PC-9 (cell line): ENCODE measurements at regions of chr2 and their contacts with region 1.

Region 1: GRCh38 chr2:46650556-46651001 is 171.2 kb downstream of the TMEM247 start:
- DNase-seq: peak; percentile 61 to 70
- H3K4me3 ChIP-seq: no peak overlapping the region
- H3K27ac ChIP-seq: no peak overlapping the region
- H3K4me1 ChIP-seq: peaks cover 30% of the 10 kb centered on the region
- H3K27me3 ChIP-seq: no peaks in the 10 kb centered on the region
- CTCF ChIP-seq: peak; percentile 98

Region 2: DNA sequence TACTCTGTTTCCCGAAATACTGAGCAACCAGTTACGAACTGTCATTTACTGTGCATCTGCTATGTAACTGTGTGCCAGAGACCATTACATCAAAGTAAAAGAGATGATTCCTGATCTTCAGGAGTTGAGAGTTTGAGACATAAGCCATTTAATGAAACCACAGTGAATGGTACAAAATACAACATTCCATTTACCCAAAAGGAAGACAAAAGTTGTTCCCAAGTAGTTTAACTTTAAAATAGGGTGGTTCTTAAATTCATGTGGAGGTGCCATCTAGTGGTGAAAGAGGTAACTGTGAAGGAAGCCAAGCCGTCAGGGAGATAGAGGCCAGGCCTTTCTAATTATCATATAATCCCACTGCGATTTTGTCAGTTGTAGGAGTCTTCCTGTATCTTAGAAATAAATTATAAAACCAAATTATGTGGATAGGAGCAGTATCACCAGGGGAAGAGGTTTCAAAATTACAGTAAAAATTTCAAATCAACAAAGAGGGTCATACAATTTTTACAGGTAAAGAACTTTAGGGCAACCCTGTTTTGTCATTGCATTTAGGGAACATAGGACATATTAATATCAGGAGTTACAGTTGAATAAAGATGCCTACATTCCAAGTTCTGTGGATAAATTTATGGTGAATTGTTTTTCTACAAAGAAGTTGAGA is 285.7 kb before region 1 on chr2:
- CTCF ChIA-PET with region 1: no interaction called
- POLR2A ChIA-PET with region 1: no interaction called
- intact Hi-C with region 1: loop called (anchors 10 kb)
- DNase-seq: peak; percentile 35 to 49
- H3K4me3 ChIP-seq: no peak overlapping the region
- H3K27ac ChIP-seq: no peak overlapping the region
- H3K4me1 ChIP-seq: 0 out of 2 replicates have a peak, but pooled peaks cover 12% of the 10 kb centered on the region
- H3K27me3 ChIP-seq: no peaks in the 10 kb centered on the region
- CTCF ChIP-seq: peak; percentile 98

Region 3: GRCh38 chr2:46612675-46613074 is 37.9 kb before region 1 on chr2:
- CTCF ChIA-PET with region 1: no interaction called
- POLR2A ChIA-PET with region 1: no interaction called
- intact Hi-C with region 1: no loop called
- DNase-seq: no peak
- H3K4me3 ChIP-seq: no peak overlapping the region
- H3K27ac ChIP-seq: no peak overlapping the region
- H3K4me1 ChIP-seq: peaks cover 10% of the 10 kb centered on the region
- H3K27me3 ChIP-seq: no peaks in the 10 kb centered on the region
- CTCF ChIP-seq: no peak

Region 4: DNA sequence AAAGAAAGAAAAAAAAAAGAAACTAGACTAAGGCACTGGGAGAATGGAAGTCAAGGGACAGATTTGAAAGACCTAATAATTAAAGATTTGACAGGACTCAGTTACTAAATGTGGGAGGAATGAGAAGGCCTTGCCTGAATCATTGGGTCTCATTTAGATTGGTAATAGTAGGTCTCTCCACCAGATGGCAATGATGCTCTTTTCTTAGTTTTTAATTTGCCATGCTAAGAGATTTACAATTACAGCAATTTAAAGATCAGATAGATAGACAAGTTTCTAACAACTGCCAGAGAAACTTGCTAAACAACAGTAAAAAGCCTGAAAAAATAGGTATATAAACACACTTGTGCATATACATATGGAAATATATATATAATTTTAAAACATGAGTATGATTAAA is 18.2 kb before region 1 on chr2:
- CTCF ChIA-PET with region 1: interaction called, 7 read pairs
- POLR2A ChIA-PET with region 1: no interaction called
- intact Hi-C with region 1: loop called (anchors 1 kb)
- DNase-seq: peak in 1 of 2 experiments; percentile 60
- H3K4me3 ChIP-seq: no peak overlapping the region
- H3K27ac ChIP-seq: no peak overlapping the region
- H3K4me1 ChIP-seq: no peaks in the 10 kb centered on the region
- H3K27me3 ChIP-seq: no peaks in the 10 kb centered on the region
- CTCF ChIP-seq: peak; percentile 85

Region 5: GRCh38 chr2:46735108-46735691 is 84.6 kb after region 1 on chr2:
- CTCF ChIA-PET with region 1: no interaction called
- POLR2A ChIA-PET with region 1: no interaction called
- intact Hi-C with region 1: no loop called
- DNase-seq: no peak
- H3K4me3 ChIP-seq: no peak overlapping the region
- H3K27ac ChIP-seq: no peak overlapping the region
- H3K4me1 ChIP-seq: peaks cover 17% of the 10 kb centered on the region
- H3K27me3 ChIP-seq: no peaks in the 10 kb centered on the region
- CTCF ChIP-seq: no peak

Region 6: GRCh38 chr2:46776687-46777327 is 126.2 kb after region 1 on chr2:
- CTCF ChIA-PET with region 1: no interaction called
- POLR2A ChIA-PET with region 1: no interaction called
- intact Hi-C with region 1: loop called (anchors 5 kb)
- DNase-seq: peak; percentile 34 to 51
- H3K4me3 ChIP-seq: no peak overlapping the region
- H3K27ac ChIP-seq: no peak overlapping the region
- H3K4me1 ChIP-seq: peaks cover 9% of the 10 kb centered on the region
- H3K27me3 ChIP-seq: no peaks in the 10 kb centered on the region
- CTCF ChIP-seq: peak; percentile 85

Region 7: DNA sequence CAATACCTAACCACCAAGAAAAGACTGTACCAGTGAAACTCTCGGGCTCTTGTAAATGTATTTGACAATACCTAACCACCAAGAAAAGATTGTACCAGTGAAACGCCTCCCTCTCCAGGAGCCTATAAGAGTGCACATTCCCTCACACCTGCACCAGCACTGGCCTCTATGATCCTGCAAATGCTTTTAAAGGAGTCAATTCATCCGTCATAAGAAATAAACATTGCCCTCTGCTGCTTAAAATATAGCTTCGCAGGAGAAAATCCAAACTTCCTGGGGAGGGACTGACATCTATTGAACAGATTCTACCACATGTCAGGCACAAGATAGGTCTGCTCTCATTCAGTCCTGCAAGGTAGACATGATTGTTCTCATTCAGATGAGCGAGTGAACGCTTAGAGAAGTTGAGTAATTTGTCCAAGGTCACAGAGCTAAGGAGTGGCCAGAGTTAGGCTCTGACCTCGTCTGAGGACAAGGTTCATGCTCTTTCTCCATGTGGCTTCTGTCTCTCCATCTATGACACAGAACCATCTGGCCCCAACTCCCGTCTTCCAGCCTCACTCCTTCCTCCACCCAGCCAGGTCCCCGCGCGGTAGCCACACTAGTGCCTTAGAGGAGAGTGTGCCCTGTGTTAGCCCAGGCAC is 226.3 kb after region 1 on chr2:
- CTCF ChIA-PET with region 1: interaction called, 3 read pairs
- POLR2A ChIA-PET with region 1: no interaction called
- intact Hi-C with region 1: loop called (anchors 2 kb)
- DNase-seq: peak; percentile 46 to 75
- H3K4me3 ChIP-seq: no peak overlapping the region
- H3K27ac ChIP-seq: no peak overlapping the region
- H3K4me1 ChIP-seq: peaks cover 17% of the 10 kb centered on the region
- H3K27me3 ChIP-seq: no peaks in the 10 kb centered on the region
- CTCF ChIP-seq: peak; percentile 75

Region 8: GRCh38 chr2:46887028-46887885 is 236.7 kb after region 1 on chr2:
- CTCF ChIA-PET with region 1: interaction called, 5 read pairs
- POLR2A ChIA-PET with region 1: no interaction called
- intact Hi-C with region 1: loop called (anchors 2 kb)
- DNase-seq: peak; percentile 30 to 49
- H3K4me3 ChIP-seq: no peak overlapping the region
- H3K27ac ChIP-seq: no peak overlapping the region
- H3K4me1 ChIP-seq: peaks cover 13% of the 10 kb centered on the region
- H3K27me3 ChIP-seq: no peaks in the 10 kb centered on the region
- CTCF ChIP-seq: no peak